MCF 10A (cell line): ENCODE measurements at regions of chr10 and their contacts with region 1.

Region 1: DNA sequence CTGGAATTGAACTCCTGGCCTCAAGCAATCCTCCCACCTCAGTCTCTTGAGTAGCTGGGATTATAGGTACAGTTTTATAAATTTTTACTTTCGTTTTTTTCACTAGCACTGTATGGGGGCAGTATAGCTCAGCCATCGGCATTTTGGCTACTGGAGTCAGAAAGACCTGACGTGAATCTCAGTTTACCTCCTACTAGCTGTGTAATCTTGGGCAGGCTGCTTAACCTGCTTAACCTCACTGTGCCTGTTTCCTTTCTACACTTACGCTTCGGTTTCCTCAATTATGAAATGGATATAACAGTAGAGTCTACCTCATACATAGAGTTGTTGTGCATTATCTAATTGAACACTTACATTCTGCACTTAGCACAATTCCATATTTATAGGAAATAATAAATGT is 16.7 kb downstream of the STN1 start:
- DNase-seq: no peak
- H3K4me3 Mint-ChIP-seq: no peak overlapping the region
- H3K27ac Mint-ChIP-seq: peak overlapping the region; percentile 87
- H3K4me1 Mint-ChIP-seq: peaks cover 16% of the 10 kb centered on the region
- H3K27me3 Mint-ChIP-seq: no peaks in the 10 kb centered on the region
- CTCF ChIP-seq: no peak

Region 2: DNA sequence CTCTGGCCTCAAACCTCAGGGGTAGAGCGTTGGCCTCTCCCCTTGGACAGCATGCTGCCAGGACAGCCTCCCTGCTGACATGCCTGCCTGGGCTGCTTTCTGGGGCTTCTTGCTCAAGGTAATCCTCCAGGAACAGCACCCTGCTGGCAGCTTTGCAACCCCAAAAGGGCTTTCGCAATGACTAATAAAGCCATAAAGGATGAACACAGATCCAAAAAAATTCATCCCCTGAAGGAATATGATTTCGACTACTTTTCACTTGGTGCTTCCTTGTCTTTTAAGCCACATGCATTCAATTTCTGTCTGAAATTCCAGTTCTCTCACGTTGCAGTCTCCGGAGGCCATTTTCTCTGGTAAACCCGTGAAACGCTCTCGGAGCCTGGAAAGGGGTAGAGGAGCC is 30.8 kb before region 1 on chr10:
- CTCF ChIA-PET with region 1: no interaction called
- POLR2A ChIA-PET with region 1: interaction called, 10 read pairs
- intact Hi-C with region 1: no loop called
- DNase-seq: peak; percentile 97
- H3K4me3 Mint-ChIP-seq: peak overlapping the region; percentile 70
- H3K27ac Mint-ChIP-seq: peak overlapping the region; percentile 97
- H3K4me1 Mint-ChIP-seq: peaks cover 29% of the 10 kb centered on the region
- H3K27me3 Mint-ChIP-seq: no peaks in the 10 kb centered on the region
- CTCF ChIP-seq: no peak